HEK293 (cell line): ENCODE measurements at regions of chr2 and their contacts with region 1.

Region 1: GRCh38 chr2:112749755-112750559 is 14.5 kb downstream of the CKAP2L start:
- H3K4me3 ChIP-seq: no peak overlapping the region
- H3K27ac ChIP-seq: no peak overlapping the region
- H3K4me1 ChIP-seq: peaks cover 16% of the 10 kb centered on the region
- CTCF ChIP-seq: peak; percentile 73

Region 2: DNA sequence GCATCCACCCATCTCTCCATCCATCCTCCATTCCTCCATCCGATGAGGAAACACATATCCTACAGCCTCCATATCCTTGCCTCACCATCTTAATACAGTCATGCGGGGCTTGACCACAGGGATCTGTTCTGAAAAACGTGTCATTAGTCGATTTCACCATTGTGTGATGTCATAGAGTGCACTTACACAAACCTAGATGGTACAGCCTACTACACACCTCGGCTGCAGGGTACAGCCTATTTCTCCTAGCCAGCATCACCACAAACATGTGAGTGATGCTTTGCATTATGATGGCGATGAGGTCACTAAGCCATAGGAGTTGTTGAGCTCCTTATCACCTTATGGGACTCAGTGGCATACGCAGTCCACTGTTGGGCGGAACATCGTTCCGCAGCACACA is 31.0 kb before region 1 on chr2:
- CTCF ChIA-PET with region 1: no interaction called
- POLR2A ChIA-PET with region 1: no interaction called
- H3K4me3 ChIP-seq: no peak overlapping the region
- H3K27ac ChIP-seq: no peak overlapping the region
- H3K4me1 ChIP-seq: no peaks in the 10 kb centered on the region
- CTCF ChIP-seq: no peak

Region 3: GRCh38 chr2:112737542-112738232 is 12.3 kb before region 1 on chr2:
- CTCF ChIA-PET with region 1: interaction called, 48 read pairs
- POLR2A ChIA-PET with region 1: no interaction called
- H3K4me3 ChIP-seq: no peak overlapping the region
- H3K27ac ChIP-seq: no peak overlapping the region
- H3K4me1 ChIP-seq: no peaks in the 10 kb centered on the region
- CTCF ChIP-seq: no peak

Region 4: DNA sequence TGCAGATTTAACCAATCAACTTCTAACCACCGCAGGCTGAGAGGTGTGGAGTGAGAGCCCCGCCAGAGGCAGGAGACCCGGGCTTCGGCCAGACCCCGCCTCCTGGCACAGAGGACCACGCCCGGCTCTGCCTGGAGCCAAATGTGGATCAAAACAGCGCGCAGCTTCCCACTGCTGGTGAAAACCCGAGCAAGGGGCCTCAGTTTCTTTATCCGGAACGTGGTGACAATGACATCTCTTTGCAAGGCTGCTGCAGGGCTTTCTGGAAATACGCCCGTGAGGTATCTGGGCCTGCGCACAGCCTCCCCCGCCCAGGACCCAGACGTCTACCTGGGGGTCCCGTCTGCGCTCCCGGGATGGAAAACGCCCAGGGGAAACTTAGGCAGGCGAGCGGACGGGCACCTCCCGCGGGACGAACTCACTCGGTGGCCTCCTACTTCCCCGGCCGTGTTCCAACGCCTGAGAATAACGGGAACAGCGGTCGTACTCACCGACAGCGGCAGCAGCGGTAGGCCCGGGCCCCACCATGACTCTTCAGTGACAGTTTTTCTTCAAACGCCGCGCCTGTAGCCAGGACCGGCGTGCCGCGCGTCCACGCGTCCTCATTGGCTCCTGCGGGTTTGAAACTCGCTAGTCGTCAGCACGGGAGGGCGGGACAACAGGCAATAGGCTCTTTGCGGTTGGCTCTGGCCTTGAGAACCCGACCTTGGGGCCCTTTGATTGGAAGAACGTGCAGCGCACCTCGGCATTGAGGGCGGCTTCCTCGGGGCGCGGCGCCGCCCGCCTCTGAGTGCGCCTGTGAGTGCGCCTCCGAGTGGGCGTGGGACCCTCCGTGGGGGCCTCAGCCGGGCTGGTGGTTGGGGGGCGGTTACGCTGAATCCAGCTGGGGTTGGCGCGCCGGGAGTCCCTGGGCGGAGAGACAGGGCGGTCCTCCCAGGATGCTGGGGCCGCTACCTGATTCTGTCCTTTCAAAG is 14.4 kb after region 1 on chr2 and contains the start of gene CKAP2L:
- CTCF ChIA-PET with region 1: interaction called, 35 read pairs
- POLR2A ChIA-PET with region 1: interaction called, 4 read pairs
- H3K4me3 ChIP-seq: peak within 1 kb of the TSS; percentile 99
- H3K27ac ChIP-seq: peak within 1 kb of the TSS; percentile 72; the same call in 1 of the 2 replicates
- H3K4me1 ChIP-seq: 0 out of 2 replicates have a peak, but pooled peaks cover 7% of the 10 kb centered on the region
- CTCF ChIP-seq: no peak; the same call in 1 of the 2 replicates

Region 5: DNA sequence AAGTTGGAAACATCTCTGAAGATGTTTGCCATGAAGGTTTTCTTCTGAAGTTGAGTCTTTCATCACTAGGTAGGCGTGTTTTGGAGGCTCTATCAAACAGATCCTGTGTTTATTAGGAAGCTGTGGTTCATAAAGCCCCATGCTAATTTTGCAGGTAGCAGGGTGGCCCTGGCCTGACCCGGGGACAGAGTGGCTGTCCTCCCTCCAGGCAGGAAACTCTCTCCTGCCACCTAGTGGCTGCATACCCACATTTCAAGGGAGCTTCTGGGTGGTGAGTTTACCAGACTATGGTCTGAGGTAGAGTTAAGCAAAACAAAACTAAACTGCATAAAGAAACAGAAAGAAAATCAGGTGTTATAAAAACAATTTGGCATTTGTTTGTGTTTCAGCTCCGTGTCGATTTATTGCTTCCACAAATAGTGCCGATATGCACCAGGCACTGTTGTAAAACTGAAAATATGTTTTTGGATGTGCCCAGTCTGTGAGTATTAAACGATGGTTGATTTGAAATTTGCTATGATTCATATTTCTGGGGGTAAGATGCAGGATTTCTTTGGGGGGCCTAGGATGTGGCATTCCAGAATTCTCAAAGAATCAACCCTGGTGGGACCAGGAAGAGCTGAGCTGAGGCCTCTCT is 135.0 kb after region 1 on chr2:
- CTCF ChIA-PET with region 1: interaction called, 64 read pairs
- POLR2A ChIA-PET with region 1: interaction called, 3 read pairs
- H3K4me3 ChIP-seq: no peak overlapping the region
- H3K27ac ChIP-seq: no peak overlapping the region
- H3K4me1 ChIP-seq: peaks cover 2% of the 10 kb centered on the region; the same call in 1 of the 2 replicates
- CTCF ChIP-seq: peak; percentile 48

Region 6: GRCh38 chr2:112902816-112903215 is 152.9 kb after region 1 on chr2:
- CTCF ChIA-PET with region 1: interaction called, 12 read pairs
- POLR2A ChIA-PET with region 1: no interaction called
- H3K4me3 ChIP-seq: no peak overlapping the region
- H3K27ac ChIP-seq: no peak overlapping the region
- H3K4me1 ChIP-seq: no peaks in the 10 kb centered on the region
- CTCF ChIP-seq: no peak

Region 7: GRCh38 chr2:112947374-112947773 is 197.4 kb after region 1 on chr2:
- CTCF ChIA-PET with region 1: interaction called, 177 read pairs
- POLR2A ChIA-PET with region 1: no interaction called
- H3K4me3 ChIP-seq: no peak overlapping the region
- H3K27ac ChIP-seq: no peak overlapping the region
- H3K4me1 ChIP-seq: no peaks in the 10 kb centered on the region
- CTCF ChIP-seq: no peak

Region 8: DNA sequence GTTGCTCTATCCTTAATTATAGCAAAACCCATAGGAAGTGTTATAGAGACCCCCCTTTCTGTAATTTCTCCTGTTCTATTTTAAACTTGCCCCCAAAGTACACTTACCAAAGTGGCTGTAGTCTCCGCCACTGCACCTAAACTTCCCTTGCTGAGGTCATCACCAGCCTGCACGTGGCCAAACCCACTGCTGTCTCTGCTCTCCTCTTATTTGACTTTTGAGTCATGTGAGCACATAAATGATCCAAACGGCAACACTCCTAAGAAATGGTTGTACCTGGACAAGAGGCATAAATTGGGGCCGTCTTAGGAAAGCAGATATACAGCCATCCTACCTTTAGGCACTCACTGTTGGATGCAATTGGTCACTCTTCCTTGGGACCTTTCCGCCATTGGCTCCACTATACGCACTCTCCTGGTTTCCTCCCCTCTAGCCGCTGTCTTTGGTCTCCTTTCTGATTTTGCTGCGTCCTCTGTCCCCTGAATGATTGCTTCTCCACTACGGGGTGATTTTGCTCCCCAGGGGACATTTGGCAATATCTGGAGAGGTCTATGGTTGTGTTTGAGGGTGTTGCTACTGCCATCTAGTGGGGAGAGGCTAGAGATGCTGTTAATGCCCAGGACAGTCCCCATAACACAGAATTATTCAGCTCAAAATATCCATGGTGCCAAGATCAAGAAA is 208.6 kb after region 1 on chr2:
- CTCF ChIA-PET with region 1: interaction called, 17 read pairs
- POLR2A ChIA-PET with region 1: no interaction called
- H3K4me3 ChIP-seq: no peak overlapping the region
- H3K27ac ChIP-seq: no peak overlapping the region
- H3K4me1 ChIP-seq: no peaks in the 10 kb centered on the region
- CTCF ChIP-seq: no peak; the same call in 1 of the 2 replicates

Region 9: GRCh38 chr2:113784823-113785744 is 1035.1 kb after region 1 on chr2:
- CTCF ChIA-PET with region 1: no interaction called
- POLR2A ChIA-PET with region 1: no interaction called
- H3K4me3 ChIP-seq: no peak overlapping the region
- H3K27ac ChIP-seq: no peak overlapping the region
- H3K4me1 ChIP-seq: no peaks in the 10 kb centered on the region
- CTCF ChIP-seq: no peak